GM12878 (cell line): ENCODE measurements at regions of chr4 and their contacts with region 1.

Region 1: GRCh38 chr4:53804719-53805118 is 213.4 kb upstream of the LNX1 start:
- DNase-seq: peak; percentile 12
- ATAC-seq: peak; percentile 98
- H3K4me3 ChIP-seq: no peak overlapping the region
- H3K27ac ChIP-seq: no peak overlapping the region
- H3K4me1 ChIP-seq: 0 out of 2 replicates have a peak, but pooled peaks cover 3% of the 10 kb centered on the region
- H3K27me3 ChIP-seq: no peaks in the 10 kb centered on the region
- CTCF ChIP-seq: peak; percentile 65 to 74 (median 72)
- EP300 ChIP-seq: no peak
- POLR2A ChIP-seq: no peak
- RAD21 ChIP-seq: peak; percentile 77

Region 2: GRCh38 chr4:53490965-53491622 is 313.6 kb before region 1 on chr4:
- CTCF ChIA-PET with region 1: interaction called, 21 read pairs
- POLR2A ChIA-PET with region 1: no interaction called
- RAD21 ChIA-PET with region 1: interaction called, 11 read pairs
- SMC1A ChIA-PET with region 1: interaction called, 15 read pairs
- in situ Hi-C with region 1: no loop called
- intact Hi-C with region 1: loop called (anchors 1 kb)
- DNase-seq: no peak
- ATAC-seq: peak; percentile 89
- H3K4me3 ChIP-seq: no peak overlapping the region
- H3K27ac ChIP-seq: no peak overlapping the region
- H3K4me1 ChIP-seq: no peaks in the 10 kb centered on the region
- H3K27me3 ChIP-seq: peaks cover 0 to 3% of the 10 kb centered on the region in 2 experiments; a peak in 1 of 4 replicates
- CTCF ChIP-seq: peak; percentile 53 to 67 (median 62)
- EP300 ChIP-seq: no peak
- POLR2A ChIP-seq: no peak
- RAD21 ChIP-seq: peak; percentile 64

Region 3: GRCh38 chr4:53601251-53601764 is 203.4 kb before region 1 on chr4:
- CTCF ChIA-PET with region 1: interaction called, 4 read pairs
- POLR2A ChIA-PET with region 1: no interaction called
- RAD21 ChIA-PET with region 1: no interaction called
- SMC1A ChIA-PET with region 1: no interaction called
- in situ Hi-C with region 1: no loop called
- intact Hi-C with region 1: loop called (anchors 10 kb)
- DNase-seq: no peak
- ATAC-seq: peak; percentile 89
- H3K4me3 ChIP-seq: no peak overlapping the region
- H3K27ac ChIP-seq: no peak overlapping the region
- H3K4me1 ChIP-seq: peaks cover 16% of the 10 kb centered on the region
- H3K27me3 ChIP-seq: no peaks in the 10 kb centered on the region
- CTCF ChIP-seq: peak; percentile 35 to 49 (median 45); a peak in 5 of 6 replicates
- EP300 ChIP-seq: no peak
- POLR2A ChIP-seq: no peak
- RAD21 ChIP-seq: peak; percentile 44

Region 4: DNA sequence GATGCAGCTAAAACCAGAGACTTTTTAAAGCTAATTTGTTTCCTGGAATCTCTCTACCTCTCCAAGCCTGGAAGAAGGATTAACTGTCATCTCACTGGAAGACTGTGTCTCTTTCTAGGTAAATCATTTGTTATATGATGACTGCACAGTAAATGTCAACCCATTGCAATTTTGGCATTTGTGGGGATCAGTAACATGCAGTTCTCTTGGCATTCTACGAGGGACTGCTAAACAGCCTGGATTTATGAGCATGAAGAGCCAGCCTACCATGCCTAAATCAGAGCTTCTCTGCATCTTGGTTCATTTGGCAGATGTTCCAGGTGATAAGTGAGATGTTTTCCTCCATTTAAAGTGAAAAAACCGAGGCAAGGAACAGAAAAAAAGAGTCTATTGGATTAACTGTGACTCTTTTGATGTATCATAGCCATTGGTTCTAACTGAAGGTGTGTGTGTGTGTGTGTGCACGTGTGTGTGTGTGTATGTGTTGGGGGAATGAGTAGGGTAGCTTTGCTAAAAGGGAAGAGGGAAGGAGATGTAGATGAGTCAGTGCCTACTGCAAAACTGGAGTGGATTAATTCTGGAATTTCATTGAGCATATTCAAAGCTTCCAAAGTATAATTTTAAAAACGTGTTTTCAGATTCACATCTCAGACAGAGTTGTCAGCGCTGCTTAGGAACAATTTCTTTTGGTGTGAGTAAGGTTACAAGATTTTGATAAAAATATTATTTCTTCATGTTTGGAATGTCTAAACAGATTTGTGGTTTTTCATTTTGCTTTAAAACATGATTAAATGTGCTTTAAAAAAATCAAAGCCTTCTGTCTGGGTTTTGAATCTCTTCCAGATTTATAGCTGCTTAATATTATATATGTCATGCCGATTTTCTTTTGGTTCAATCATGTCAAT is 90.2 kb before region 1 on chr4:
- CTCF ChIA-PET with region 1: interaction called, 305 read pairs
- POLR2A ChIA-PET with region 1: no interaction called
- RAD21 ChIA-PET with region 1: interaction called, 12 read pairs
- SMC1A ChIA-PET with region 1: interaction called, 228 read pairs
- in situ Hi-C with region 1: no loop called
- intact Hi-C with region 1: no loop called
- DNase-seq: no peak
- ATAC-seq: no peak
- H3K4me3 ChIP-seq: no peak overlapping the region
- H3K27ac ChIP-seq: no peak overlapping the region
- H3K4me1 ChIP-seq: no peaks in the 10 kb centered on the region
- H3K27me3 ChIP-seq: no peaks in the 10 kb centered on the region
- CTCF ChIP-seq: no peak
- EP300 ChIP-seq: no peak
- POLR2A ChIP-seq: no peak
- RAD21 ChIP-seq: no peak

Region 5: GRCh38 chr4:53790286-53790685 is 14.4 kb before region 1 on chr4:
- CTCF ChIA-PET with region 1: interaction called, 11 read pairs
- POLR2A ChIA-PET with region 1: no interaction called
- RAD21 ChIA-PET with region 1: no interaction called
- SMC1A ChIA-PET with region 1: interaction called, 5 read pairs
- in situ Hi-C with region 1: no loop called
- intact Hi-C with region 1: no loop called
- DNase-seq: no peak
- ATAC-seq: no peak
- H3K4me3 ChIP-seq: no peak overlapping the region
- H3K27ac ChIP-seq: no peak overlapping the region
- H3K4me1 ChIP-seq: no peaks in the 10 kb centered on the region
- H3K27me3 ChIP-seq: no peaks in the 10 kb centered on the region; a peak in 1 of 4 replicates
- CTCF ChIP-seq: no peak
- EP300 ChIP-seq: no peak
- POLR2A ChIP-seq: no peak
- RAD21 ChIP-seq: no peak